Aorta (tissue), 5 donors: ENCODE measurements at regions of chr9 and their contacts with region 1.

Region 1: DNA sequence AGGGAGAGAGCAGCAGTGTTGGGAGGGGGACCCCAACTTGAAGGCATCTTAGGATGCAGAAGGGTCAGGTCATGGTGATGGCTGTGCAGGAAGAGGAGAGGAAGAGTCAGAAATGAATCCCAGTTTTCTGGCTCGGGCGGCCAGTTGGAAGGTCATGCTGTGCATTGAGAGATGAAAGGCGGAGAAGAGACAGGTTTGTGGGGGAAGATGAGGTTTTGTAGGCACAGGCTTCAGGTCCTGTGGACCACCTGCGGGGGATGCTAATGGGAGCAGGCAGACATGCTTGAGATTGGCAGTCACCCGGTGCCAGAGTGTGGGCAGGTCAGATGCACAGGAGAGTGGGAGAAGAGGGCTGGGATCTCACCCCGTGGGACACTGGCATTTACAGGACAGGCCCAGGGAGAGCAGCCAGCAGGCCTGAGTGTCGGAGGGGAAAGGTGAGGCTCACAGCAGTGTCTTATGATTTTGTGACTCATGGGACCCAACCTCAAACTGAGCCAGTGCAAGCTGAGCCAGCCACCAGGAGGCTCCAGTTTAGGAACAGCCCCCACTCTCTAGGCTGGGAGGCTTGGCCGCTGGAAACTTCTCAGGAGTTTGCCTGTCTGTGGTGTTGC is 17.5 kb downstream of the STXBP1 start:
- DNase-seq: no peak
- ATAC-seq: peak; percentile 23
- H3K4me3 ChIP-seq: no peak overlapping the region
- H3K27ac ChIP-seq: no peak overlapping the region
- H3K4me1 ChIP-seq: no peaks in the 10 kb centered on the region
- H3K27me3 ChIP-seq: no peaks in the 10 kb centered on the region

Region 2: GRCh38 chr9:127684576-127684975 is 55.0 kb after region 1 on chr9:
- intact Hi-C with region 1: loop called in 1 of 2 experiments (anchors 10 kb)
- DNase-seq: no peak
- ATAC-seq: no peak
- H3K4me3 ChIP-seq: no peak overlapping the region
- H3K27ac ChIP-seq: no peak overlapping the region
- H3K4me1 ChIP-seq: no peaks in the 10 kb centered on the region
- H3K27me3 ChIP-seq: no peaks in the 10 kb centered on the region

Region 3: GRCh38 chr9:128610897-128611296 is 981.3 kb after region 1 on chr9:
- intact Hi-C with region 1: no loop called
- DNase-seq: no peak
- ATAC-seq: no peak
- H3K4me3 ChIP-seq: no peak overlapping the region
- H3K27ac ChIP-seq: no peak overlapping the region
- H3K4me1 ChIP-seq: no peaks in the 10 kb centered on the region
- H3K27me3 ChIP-seq: no peaks in the 10 kb centered on the region